Activated CD4-positive, alpha-beta memory T cell treated with anti-CD3 and anti-CD28 coated beads for 36 hours (primary cell): ENCODE measurements at regions of chr14 and their contacts with region 1.

Region 1: DNA sequence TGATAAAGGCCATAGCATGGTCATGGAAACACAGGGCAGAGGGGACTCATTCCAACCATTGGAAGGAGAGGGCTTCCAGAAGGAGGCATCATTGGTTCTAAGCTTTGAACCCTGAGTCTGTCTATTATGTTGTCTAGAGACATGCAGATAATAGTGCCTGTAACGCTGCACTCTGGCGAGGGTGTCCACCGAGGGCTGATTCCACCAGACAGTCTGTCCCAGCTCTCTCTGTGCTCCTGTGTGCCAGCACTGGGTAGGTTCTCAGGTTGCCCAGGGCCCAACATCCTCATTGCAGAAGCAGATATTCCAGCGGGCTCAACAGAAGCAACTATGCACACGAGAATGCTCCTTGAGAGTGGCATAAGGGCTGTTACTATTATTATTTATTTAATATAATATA is 18.7 kb upstream of the CLMN start:
- DNase-seq: no peak
- H3K4me3 Mint-ChIP-seq: no peak overlapping the region
- H3K27ac Mint-ChIP-seq: no peak overlapping the region
- H3K4me1 Mint-ChIP-seq: no peaks in the 10 kb centered on the region
- H3K27me3 Mint-ChIP-seq: peaks cover 8% of the 10 kb centered on the region

Region 2: GRCh38 chr14:94485944-94486841 is 852.2 kb before region 1 on chr14:
- CTCF ChIA-PET with region 1: no interaction called
- POLR2A ChIA-PET with region 1: no interaction called
- intact Hi-C with region 1: no loop called
- DNase-seq: peak; percentile 57
- H3K4me3 Mint-ChIP-seq: no peak overlapping the region
- H3K27ac Mint-ChIP-seq: no peak overlapping the region
- H3K4me1 Mint-ChIP-seq: peaks cover 15% of the 10 kb centered on the region
- H3K27me3 Mint-ChIP-seq: peaks cover 13% of the 10 kb centered on the region

Region 3: GRCh38 chr14:95291859-95292542 is 46.4 kb before region 1 on chr14:
- CTCF ChIA-PET with region 1: no interaction called
- POLR2A ChIA-PET with region 1: no interaction called
- intact Hi-C with region 1: no loop called
- DNase-seq: peak; percentile 26
- H3K4me3 Mint-ChIP-seq: no peak overlapping the region
- H3K27ac Mint-ChIP-seq: no peak overlapping the region
- H3K4me1 Mint-ChIP-seq: peaks cover 3% of the 10 kb centered on the region
- H3K27me3 Mint-ChIP-seq: peaks cover 29% of the 10 kb centered on the region

Region 4: GRCh38 chr14:95319312-95320021 is 19.0 kb before region 1 on chr14 and contains the start of gene CLMN:
- CTCF ChIA-PET with region 1: no interaction called
- POLR2A ChIA-PET with region 1: no interaction called
- intact Hi-C with region 1: no loop called
- DNase-seq: peak; percentile 27
- H3K4me3 Mint-ChIP-seq: peak within 1 kb of the TSS; percentile 55
- H3K27ac Mint-ChIP-seq: no peak within 1 kb of the TSS
- H3K4me1 Mint-ChIP-seq: peaks cover 15% of the 10 kb centered on the region
- H3K27me3 Mint-ChIP-seq: peaks cover 23% of the 10 kb centered on the region
- total RNA-seq, gene CLMN: 0.92 to 0.97 TPM

Region 5: DNA sequence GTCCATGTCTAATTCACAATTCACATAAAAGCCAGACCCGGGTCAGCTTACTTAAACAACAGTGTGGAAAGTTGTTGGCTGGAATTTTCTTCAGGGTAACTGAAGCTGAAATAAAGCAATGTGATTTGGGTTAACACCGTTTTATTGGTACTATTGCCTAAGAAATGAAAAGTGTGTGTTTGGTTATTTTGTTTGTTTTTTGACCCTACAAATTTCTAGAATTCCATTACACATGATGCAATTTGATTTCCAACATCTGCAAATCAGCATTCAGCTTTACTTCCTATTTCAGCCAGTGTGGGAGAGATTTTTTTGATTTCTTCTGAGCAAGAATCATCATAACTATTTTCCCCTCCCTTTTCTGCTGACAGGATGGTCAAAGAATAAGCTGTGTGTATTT is 27.0 kb after region 1 on chr14:
- CTCF ChIA-PET with region 1: interaction called, 3 read pairs
- POLR2A ChIA-PET with region 1: no interaction called
- intact Hi-C with region 1: loop called (anchors 1 kb)
- DNase-seq: no peak
- H3K4me3 Mint-ChIP-seq: no peak overlapping the region
- H3K27ac Mint-ChIP-seq: no peak overlapping the region
- H3K4me1 Mint-ChIP-seq: no peaks in the 10 kb centered on the region
- H3K27me3 Mint-ChIP-seq: peaks cover 38% of the 10 kb centered on the region